ENCODE measurements at regions of chr2 and their contacts with region 1.

Region 1: DNA sequence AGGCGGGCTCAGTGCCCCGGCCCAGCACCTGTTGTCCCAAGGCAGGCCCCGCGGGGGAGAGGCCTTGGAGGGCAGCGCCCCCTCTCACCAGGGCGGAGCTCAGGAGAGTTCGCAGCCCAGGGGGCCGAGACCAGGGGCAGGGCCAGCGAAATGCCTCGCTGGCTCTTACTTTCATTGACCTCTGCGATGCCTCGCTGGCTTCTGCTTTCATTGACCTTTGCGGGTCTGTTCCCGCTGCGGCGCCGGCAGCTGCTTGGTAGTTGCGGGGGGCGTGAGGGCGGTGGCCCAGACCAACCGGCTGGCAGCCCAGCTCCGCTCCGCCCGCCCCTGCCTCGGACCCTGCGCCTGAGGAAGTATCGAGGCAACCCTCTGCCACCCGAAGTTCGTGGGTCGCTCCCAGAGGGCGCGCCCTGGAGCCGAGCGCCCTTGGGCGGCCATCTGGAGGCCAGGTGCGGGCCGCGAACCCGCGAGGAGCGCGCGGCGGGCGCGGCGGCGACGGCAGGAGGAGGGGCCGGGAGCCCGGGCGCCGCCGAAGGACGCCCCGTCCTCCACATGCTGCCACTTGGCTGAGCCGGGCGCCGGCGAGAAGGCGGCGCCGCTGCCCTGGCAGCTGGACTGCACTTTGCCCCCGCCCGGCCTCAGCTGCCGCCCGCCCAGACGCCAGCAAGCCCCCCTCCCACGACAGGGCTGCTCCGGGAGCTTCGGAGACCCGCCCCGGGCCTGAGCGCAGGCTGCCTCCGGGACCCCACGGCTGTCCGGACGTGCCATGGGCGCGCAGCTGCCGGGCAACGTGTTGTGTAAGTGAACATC is 118.0 kb upstream of the MSTN start:
- DNase-seq: peak; percentile 70
- ATAC-seq: peak; percentile 89
- H3K4me3 ChIP-seq: peak overlapping the region in 4 of 5 experiments; percentile 48 to 71 (median 60)
- H3K4me3 Mint-ChIP-seq: peak overlapping the region; percentile 87
- H3K27ac ChIP-seq: no peak overlapping the region
- H3K27ac Mint-ChIP-seq: peak overlapping the region; percentile 85
- H3K4me1 ChIP-seq: peaks cover 16 to 22% of the 10 kb centered on the region in 2 donors
- H3K4me1 Mint-ChIP-seq: peaks cover 26% of the 10 kb centered on the region
- H3K27me3 ChIP-seq: peaks cover 0 to 9% (median 0%) of the 10 kb centered on the region in 4 experiments
- H3K27me3 Mint-ChIP-seq: no peaks in the 10 kb centered on the region
- CTCF ChIP-seq: peak; percentile 31

Region 2: DNA sequence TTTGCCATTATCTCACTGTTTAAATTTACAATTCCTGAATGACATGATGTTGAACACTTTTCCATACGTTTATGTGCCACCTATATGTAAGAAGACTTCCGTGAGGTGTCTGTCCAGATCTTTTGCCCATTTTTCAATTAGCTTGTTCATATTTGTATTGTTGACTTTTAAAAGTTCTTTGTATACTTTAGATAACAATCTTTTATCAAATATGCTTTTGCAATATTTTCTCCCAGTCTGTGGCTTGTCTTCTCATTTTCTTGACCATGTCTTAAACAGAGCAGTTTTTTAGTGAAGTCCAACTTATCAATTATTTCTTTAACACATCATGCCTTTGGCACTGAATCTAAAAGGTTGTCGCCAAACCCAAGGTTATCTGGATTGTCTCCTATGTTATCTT is 14.9 kb after region 1 on chr2:
- CTCF ChIA-PET with region 1: interaction called, 4 read pairs
- POLR2A ChIA-PET with region 1: no interaction called
- intact Hi-C with region 1: loop called (anchors 2 kb)
- DNase-seq: no peak
- ATAC-seq: no peak
- H3K4me3 ChIP-seq: no peak overlapping the region
- H3K4me3 Mint-ChIP-seq: no peak overlapping the region
- H3K27ac ChIP-seq: no peak overlapping the region
- H3K27ac Mint-ChIP-seq: no peak overlapping the region
- H3K4me1 ChIP-seq: peaks cover 5 to 7% of the 10 kb centered on the region in 2 donors
- H3K4me1 Mint-ChIP-seq: peaks cover 21% of the 10 kb centered on the region
- H3K27me3 ChIP-seq: no peaks in the 10 kb centered on the region
- H3K27me3 Mint-ChIP-seq: no peaks in the 10 kb centered on the region
- CTCF ChIP-seq: no peak

Region 3: GRCh38 chr2:190319555-190320498 is 139.3 kb after region 1 on chr2 and contains the start of gene HIBCH:
- CTCF ChIA-PET with region 1: interaction called, 4 read pairs
- POLR2A ChIA-PET with region 1: no interaction called
- intact Hi-C with region 1: loop called (anchors 5 kb)
- DNase-seq: peak; percentile 85
- ATAC-seq: peak; percentile 94
- H3K4me3 ChIP-seq: peak within 1 kb of the TSS; percentile 73 to 87 (median 79)
- H3K4me3 Mint-ChIP-seq: peak within 1 kb of the TSS; percentile 95
- H3K27ac ChIP-seq: peak within 1 kb of the TSS; percentile 80 to 84
- H3K27ac Mint-ChIP-seq: peak within 1 kb of the TSS; percentile 95
- H3K4me1 ChIP-seq: peaks cover 20 to 26% of the 10 kb centered on the region in 2 donors
- H3K4me1 Mint-ChIP-seq: peaks cover 42% of the 10 kb centered on the region
- H3K27me3 ChIP-seq: no peaks in the 10 kb centered on the region
- H3K27me3 Mint-ChIP-seq: peaks cover 8% of the 10 kb centered on the region
- CTCF ChIP-seq: peak; percentile 77
- total RNA-seq, gene HIBCH: 30.2 and 36.9 TPM in 2 replicates

Measured in B cell (primary cell).